ENCODE measurements at regions of chr11 and their contacts with region 1.

Region 1: GRCh38 chr11:57501953-57502352 is 13.5 kb downstream of the SLC43A1 start:
- DNase-seq: no peak
- H3K4me3 Mint-ChIP-seq: no peak overlapping the region
- H3K27ac Mint-ChIP-seq: no peak overlapping the region
- H3K4me1 Mint-ChIP-seq: peaks cover 4% of the 10 kb centered on the region
- H3K27me3 Mint-ChIP-seq: no peaks in the 10 kb centered on the region

Region 2: GRCh38 chr11:57515332-57516060 is 13.5 kb after region 1 on chr11 and contains the start of gene SLC43A1:
- CTCF ChIA-PET with region 1: interaction called, 7 read pairs
- POLR2A ChIA-PET with region 1: interaction called, 16 read pairs
- DNase-seq: peak; percentile 50
- H3K4me3 Mint-ChIP-seq: peak within 1 kb of the TSS; percentile 98
- H3K27ac Mint-ChIP-seq: peak within 1 kb of the TSS; percentile 74
- H3K4me1 Mint-ChIP-seq: peaks cover 32% of the 10 kb centered on the region
- H3K27me3 Mint-ChIP-seq: no peaks in the 10 kb centered on the region
- total RNA-seq, gene SLC43A1: 29.9 to 31.7 TPM

Region 3: GRCh38 chr11:57644748-57645688 is 143.1 kb after region 1 on chr11:
- CTCF ChIA-PET with region 1: no interaction called
- POLR2A ChIA-PET with region 1: no interaction called
- DNase-seq: peak; percentile 85
- H3K4me3 Mint-ChIP-seq: no peak overlapping the region
- H3K27ac Mint-ChIP-seq: no peak overlapping the region
- H3K4me1 Mint-ChIP-seq: peaks cover 31% of the 10 kb centered on the region
- H3K27me3 Mint-ChIP-seq: peaks cover 64% of the 10 kb centered on the region